HCT116 (cell line): ENCODE measurements at regions of chr9 and their contacts with region 1.

Region 1: DNA sequence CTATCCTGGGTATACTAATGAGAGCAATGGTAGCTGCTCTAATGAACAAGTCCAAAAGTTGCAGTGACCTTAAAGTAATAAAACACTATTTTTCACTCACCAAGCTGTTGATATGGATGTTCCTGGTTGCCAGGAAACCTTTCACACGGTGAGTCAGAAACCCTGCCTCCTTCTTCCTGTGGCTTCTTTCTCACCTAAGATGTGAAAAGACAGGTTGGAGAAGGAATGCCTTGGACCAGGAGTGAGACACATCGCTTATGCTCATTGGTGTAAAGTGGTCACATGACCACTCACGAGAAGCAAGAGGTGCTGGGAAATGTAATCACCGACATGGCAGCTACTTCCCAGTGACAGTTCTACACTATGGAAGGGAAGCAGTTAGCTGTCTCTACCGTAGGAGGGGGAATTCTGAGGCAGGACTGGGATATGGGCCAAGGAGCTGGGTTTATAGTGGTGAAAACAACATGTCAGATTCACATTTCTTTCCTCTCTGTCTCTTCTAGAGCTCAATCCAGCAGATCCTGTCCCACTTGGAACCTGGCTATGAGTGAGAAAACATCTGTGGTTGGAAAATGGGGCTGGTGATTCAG is 320.4 kb upstream of the KLF4 start:
- DNase-seq: no peak
- ATAC-seq: no peak
- H3K4me3 ChIP-seq: no peak overlapping the region
- H3K27ac ChIP-seq: no peak overlapping the region
- H3K4me1 ChIP-seq: peaks cover 0 to 10% of the 10 kb centered on the region in 2 experiments; a peak in 1 of 4 replicates
- H3K27me3 ChIP-seq: no peaks in the 10 kb centered on the region
- CTCF ChIP-seq: no peak
- POLR2A ChIP-seq: no peak
- RAD21 ChIP-seq: no peak

Region 2: GRCh38 chr9:107862323-107862722 is 52.4 kb after region 1 on chr9:
- CTCF ChIA-PET with region 1: no interaction called
- POLR2A ChIA-PET with region 1: no interaction called
- RAD21 ChIA-PET with region 1: no interaction called
- intact Hi-C with region 1: no loop called
- DNase-seq: no peak
- ATAC-seq: no peak
- H3K4me3 ChIP-seq: no peak overlapping the region
- H3K27ac ChIP-seq: no peak overlapping the region
- H3K4me1 ChIP-seq: no peaks in the 10 kb centered on the region
- H3K27me3 ChIP-seq: no peaks in the 10 kb centered on the region
- CTCF ChIP-seq: no peak
- POLR2A ChIP-seq: no peak
- RAD21 ChIP-seq: no peak

Region 3: GRCh38 chr9:107874591-107875369 is 64.8 kb after region 1 on chr9:
- CTCF ChIA-PET with region 1: no interaction called
- POLR2A ChIA-PET with region 1: no interaction called
- RAD21 ChIA-PET with region 1: no interaction called
- intact Hi-C with region 1: loop called (anchors 10 kb)
- DNase-seq: no peak
- ATAC-seq: no peak
- H3K4me3 ChIP-seq: no peak overlapping the region
- H3K27ac ChIP-seq: no peak overlapping the region
- H3K4me1 ChIP-seq: no peaks in the 10 kb centered on the region
- H3K27me3 ChIP-seq: no peaks in the 10 kb centered on the region
- CTCF ChIP-seq: no peak
- POLR2A ChIP-seq: no peak
- RAD21 ChIP-seq: no peak

Region 4: DNA sequence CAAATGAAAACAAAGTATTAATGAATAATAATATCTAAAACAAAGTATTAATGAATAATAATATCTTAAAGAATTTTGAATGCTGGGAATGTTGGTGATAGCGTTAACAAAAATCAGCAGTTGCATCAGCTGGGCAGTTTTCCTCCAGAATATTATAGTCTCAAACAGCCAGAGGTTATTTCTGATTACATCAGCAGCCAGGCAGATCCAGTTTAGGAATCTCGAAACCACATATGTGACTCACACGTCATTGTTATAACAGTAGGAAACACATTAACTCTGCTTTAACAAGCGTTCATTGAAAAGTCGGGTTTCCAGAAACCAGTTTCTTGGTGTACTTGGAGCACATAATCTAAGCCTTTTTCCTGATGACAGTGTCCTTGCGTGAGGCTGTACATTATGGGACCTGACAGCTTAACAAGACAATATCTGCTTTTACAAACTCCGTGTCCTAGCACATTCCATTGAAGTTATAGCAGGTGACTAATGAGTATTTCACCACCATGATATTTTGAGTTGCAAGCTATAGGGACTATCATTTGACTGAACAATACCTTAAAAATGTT is 239.1 kb after region 1 on chr9:
- CTCF ChIA-PET with region 1: no interaction called
- POLR2A ChIA-PET with region 1: no interaction called
- RAD21 ChIA-PET with region 1: no interaction called
- intact Hi-C with region 1: no loop called
- DNase-seq: peak; percentile 92
- ATAC-seq: peak; percentile 79
- H3K4me3 ChIP-seq: peak overlapping the region in 1 of 2 experiments; percentile 40; a peak in 2 of 4 replicates
- H3K27ac ChIP-seq: peak overlapping the region; percentile 17; the same call in 1 of the 2 replicates
- H3K4me1 ChIP-seq: peaks cover 9 to 66% of the 10 kb centered on the region in 2 experiments
- H3K27me3 ChIP-seq: no peaks in the 10 kb centered on the region
- CTCF ChIP-seq: no peak
- POLR2A ChIP-seq: no peak
- RAD21 ChIP-seq: peak; percentile 41